HCT116 (cell line): ENCODE measurements at regions of chr5 and their contacts with region 1.

Region 1: DNA sequence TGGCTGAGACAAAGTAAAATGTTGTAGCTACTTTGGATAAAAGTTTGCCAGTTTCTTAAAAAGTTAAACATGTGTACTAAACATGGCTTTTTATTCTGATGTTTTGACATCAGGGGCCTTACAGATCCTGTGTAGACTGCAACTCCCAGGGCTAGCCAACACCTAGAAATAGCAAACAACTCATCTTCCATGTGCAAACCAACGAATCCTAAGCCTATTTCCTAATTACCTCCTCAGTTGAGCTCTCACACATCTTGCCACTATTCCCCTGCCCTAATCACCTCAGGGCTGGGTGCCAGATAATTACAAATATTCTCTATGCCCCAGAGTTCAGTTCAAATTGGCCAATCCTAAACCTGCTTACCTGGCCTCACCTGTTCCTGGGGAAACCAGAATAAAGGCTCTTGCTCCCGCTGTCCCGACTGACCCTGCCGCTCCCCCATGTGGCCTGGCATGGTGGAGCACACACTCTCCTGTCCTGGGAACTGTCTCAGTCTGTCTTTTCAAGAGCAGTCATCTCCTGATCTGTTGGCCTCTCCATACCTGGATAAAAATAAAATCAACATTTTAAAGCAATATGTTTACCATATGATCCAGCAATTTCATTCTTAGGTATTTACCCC is 37.1 kb upstream of the FAM169A start:
- DNase-seq: peak; percentile 72
- ATAC-seq: peak; percentile 100
- H3K4me3 ChIP-seq: no peak overlapping the region
- H3K27ac ChIP-seq: no peak overlapping the region
- H3K4me1 ChIP-seq: peaks cover 0 to 5% of the 10 kb centered on the region in 2 experiments; a peak in 1 of 4 replicates
- H3K27me3 ChIP-seq: no peaks in the 10 kb centered on the region
- CTCF ChIP-seq: peak; percentile 79 to 87 (median 83)
- POLR2A ChIP-seq: no peak
- RAD21 ChIP-seq: peak; percentile 86

Region 2: GRCh38 chr5:74673011-74673790 is 230.1 kb before region 1 on chr5:
- CTCF ChIA-PET with region 1: interaction called, 9 read pairs
- POLR2A ChIA-PET with region 1: no interaction called
- RAD21 ChIA-PET with region 1: no interaction called
- intact Hi-C with region 1: loop called (anchors 1 kb)
- DNase-seq: peak; percentile 24
- ATAC-seq: peak; percentile 80
- H3K4me3 ChIP-seq: no peak overlapping the region
- H3K27ac ChIP-seq: no peak overlapping the region
- H3K4me1 ChIP-seq: peaks cover 0 to 6% of the 10 kb centered on the region in 2 experiments; a peak in 2 of 4 replicates
- H3K27me3 ChIP-seq: no peaks in the 10 kb centered on the region
- CTCF ChIP-seq: peak; percentile 43 to 84 (median 49)
- POLR2A ChIP-seq: no peak
- RAD21 ChIP-seq: peak; percentile 87

Region 3: GRCh38 chr5:74717596-74717995 is 185.7 kb before region 1 on chr5:
- CTCF ChIA-PET with region 1: no interaction called
- POLR2A ChIA-PET with region 1: no interaction called
- RAD21 ChIA-PET with region 1: no interaction called
- intact Hi-C with region 1: loop called (anchors 1 kb)
- DNase-seq: no peak
- ATAC-seq: no peak
- H3K4me3 ChIP-seq: no peak overlapping the region
- H3K27ac ChIP-seq: no peak overlapping the region
- H3K4me1 ChIP-seq: no peaks in the 10 kb centered on the region
- H3K27me3 ChIP-seq: no peaks in the 10 kb centered on the region
- CTCF ChIP-seq: no peak
- POLR2A ChIP-seq: no peak
- RAD21 ChIP-seq: no peak

Region 4: DNA sequence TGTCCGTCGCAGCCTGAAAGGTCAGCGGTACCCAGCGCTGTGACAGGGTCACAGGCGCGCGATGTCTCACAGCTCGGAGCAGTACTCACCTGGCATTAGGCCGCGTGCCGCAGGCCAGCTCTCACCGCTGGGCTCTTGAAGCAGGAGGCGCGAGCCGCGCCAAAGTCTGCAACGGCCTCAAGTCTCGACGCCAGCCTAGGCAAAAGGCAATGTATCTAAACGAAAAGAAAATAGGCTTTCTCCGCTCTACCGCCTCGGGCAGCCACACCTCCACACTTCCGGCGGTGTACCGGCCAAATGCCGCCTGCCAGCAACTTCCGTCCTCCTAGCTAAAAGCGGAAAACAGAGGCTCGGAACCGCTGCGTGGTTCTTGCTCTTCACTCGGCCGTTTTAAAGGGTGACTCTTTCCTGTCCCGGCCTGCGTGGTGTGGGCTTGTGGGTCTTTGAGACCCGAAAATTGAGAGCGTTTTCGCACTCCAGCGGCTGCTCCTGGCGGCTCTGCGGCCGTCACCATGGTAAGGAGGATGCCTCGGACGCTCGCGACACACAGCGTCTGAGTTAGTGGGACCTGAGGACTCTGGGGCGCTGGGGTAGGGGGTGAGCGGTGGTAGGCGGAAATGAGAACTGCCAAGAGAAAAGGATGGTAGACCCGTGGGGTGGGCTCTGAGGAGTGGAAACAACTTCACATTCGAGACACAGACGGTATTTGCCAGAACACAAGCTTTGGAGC is 136.3 kb before region 1 on chr5 and contains the starts of genes GFM2 and NSA2:
- CTCF ChIA-PET with region 1: no interaction called
- POLR2A ChIA-PET with region 1: no interaction called
- RAD21 ChIA-PET with region 1: no interaction called
- intact Hi-C with region 1: loop called (anchors 1 kb)
- DNase-seq: peak; percentile 91
- ATAC-seq: peak; percentile 86
- H3K4me3 ChIP-seq: peak within 1 kb of the TSS; percentile 86 to 99
- H3K27ac ChIP-seq: peak within 1 kb of the TSS; percentile 70
- H3K4me1 ChIP-seq: peaks cover 24 to 38% of the 10 kb centered on the region in 2 experiments; a peak in 3 of 4 replicates
- H3K27me3 ChIP-seq: no peaks in the 10 kb centered on the region
- CTCF ChIP-seq: no peak
- POLR2A ChIP-seq: peak; percentile 46
- RAD21 ChIP-seq: no peak
- total RNA-seq, gene GFM2: 25.0 TPM
- total RNA-seq, gene NSA2: 108 TPM

Region 5: DNA sequence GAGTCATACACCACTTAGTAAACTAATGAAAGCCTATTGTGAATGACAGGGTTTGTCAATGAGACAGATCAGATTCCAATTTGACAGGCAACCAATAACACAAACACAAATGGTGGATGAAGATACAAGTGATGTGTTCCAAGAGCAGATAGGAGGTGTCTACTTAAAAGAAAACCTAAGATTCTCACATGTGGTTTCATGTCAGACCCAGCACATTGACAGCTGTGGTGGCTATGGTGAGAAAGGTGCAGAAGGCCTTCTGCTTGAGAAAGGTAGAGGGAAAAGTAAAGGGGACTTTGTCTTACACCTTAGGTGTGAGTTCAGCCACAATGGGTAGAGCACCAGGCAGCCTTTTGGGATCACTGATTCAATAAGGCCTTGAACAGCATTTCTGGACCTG is 322.2 kb after region 1 on chr5:
- CTCF ChIA-PET with region 1: no interaction called
- POLR2A ChIA-PET with region 1: no interaction called
- RAD21 ChIA-PET with region 1: no interaction called
- intact Hi-C with region 1: no loop called
- DNase-seq: no peak
- ATAC-seq: no peak
- H3K4me3 ChIP-seq: no peak overlapping the region
- H3K27ac ChIP-seq: no peak overlapping the region
- H3K4me1 ChIP-seq: no peaks in the 10 kb centered on the region
- H3K27me3 ChIP-seq: no peaks in the 10 kb centered on the region
- CTCF ChIP-seq: no peak
- POLR2A ChIP-seq: no peak
- RAD21 ChIP-seq: no peak